IMR-90 (cell line): ENCODE measurements at regions of chr13 and their contacts with region 1.

Region 1: GRCh38 chr13:102642475-102642874 is 45.7 kb downstream of the TPP2 start:
- DNase-seq: no peak
- ATAC-seq: no peak
- H3K4me3 ChIP-seq: no peak overlapping the region
- H3K27ac ChIP-seq: no peak overlapping the region
- H3K4me1 ChIP-seq: no peaks in the 10 kb centered on the region
- H3K27me3 ChIP-seq: no peaks in the 10 kb centered on the region
- CTCF ChIP-seq: no peak
- POLR2A ChIP-seq: no peak
- RAD21 ChIP-seq: no peak

Region 2: DNA sequence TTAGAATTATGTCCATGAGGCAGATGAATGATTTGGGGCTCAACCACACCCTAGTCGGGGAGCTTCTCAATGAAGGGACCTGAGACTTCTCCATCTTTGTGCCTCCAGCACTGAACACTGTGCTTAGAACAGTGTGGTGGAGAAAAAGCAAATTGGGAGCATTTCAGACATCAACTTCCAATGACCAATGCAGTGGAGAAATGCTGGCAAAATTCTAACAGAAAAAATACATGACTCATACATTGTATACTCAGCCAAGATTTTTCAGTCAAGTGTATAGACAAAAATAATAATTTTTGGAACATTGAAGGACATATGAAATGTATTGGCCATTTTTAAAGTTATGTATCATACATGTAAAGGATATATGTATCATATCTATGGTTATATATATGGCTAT is 375.3 kb before region 1 on chr13:
- CTCF ChIA-PET with region 1: no interaction called
- POLR2A ChIA-PET with region 1: no interaction called
- dilution Hi-C with region 1: no loop called
- in situ Hi-C with region 1: no loop called
- intact Hi-C with region 1: no loop called
- DNase-seq: peak; percentile 17
- ATAC-seq: peak; percentile 32; the same call in 1 of the 2 replicates
- H3K4me3 ChIP-seq: no peak overlapping the region
- H3K27ac ChIP-seq: no peak overlapping the region
- H3K4me1 ChIP-seq: no peaks in the 10 kb centered on the region
- H3K27me3 ChIP-seq: no peaks in the 10 kb centered on the region; the same call in 1 of the 2 replicates
- CTCF ChIP-seq: no peak
- POLR2A ChIP-seq: no peak
- RAD21 ChIP-seq: no peak

Region 3: DNA sequence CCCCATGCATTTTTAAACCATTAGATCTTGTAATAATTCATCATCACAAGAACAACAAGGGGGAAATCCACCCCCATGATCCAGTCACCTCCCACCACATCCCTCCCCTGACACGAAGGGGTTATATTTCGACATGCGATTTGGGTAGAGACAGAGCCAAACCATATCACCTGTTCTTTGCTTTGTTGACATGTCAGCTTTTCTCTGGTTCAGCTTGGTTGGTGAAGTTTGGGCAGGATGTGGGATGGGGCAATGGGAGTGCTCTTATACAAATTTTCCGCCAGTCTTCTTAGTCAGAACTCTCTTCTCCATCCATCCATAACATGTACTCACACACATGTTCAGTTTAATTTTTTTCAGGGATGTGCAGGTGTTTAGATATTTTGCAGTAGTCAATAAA is 32.8 kb before region 1 on chr13:
- CTCF ChIA-PET with region 1: no interaction called
- POLR2A ChIA-PET with region 1: no interaction called
- dilution Hi-C with region 1: no loop called
- in situ Hi-C with region 1: no loop called
- intact Hi-C with region 1: loop called (anchors 5 kb)
- DNase-seq: no peak
- ATAC-seq: no peak
- H3K4me3 ChIP-seq: no peak overlapping the region
- H3K27ac ChIP-seq: no peak overlapping the region
- H3K4me1 ChIP-seq: peaks cover 1% of the 10 kb centered on the region; the same call in 1 of the 2 replicates
- H3K27me3 ChIP-seq: no peaks in the 10 kb centered on the region
- CTCF ChIP-seq: no peak
- POLR2A ChIP-seq: no peak
- RAD21 ChIP-seq: no peak

Region 4: DNA sequence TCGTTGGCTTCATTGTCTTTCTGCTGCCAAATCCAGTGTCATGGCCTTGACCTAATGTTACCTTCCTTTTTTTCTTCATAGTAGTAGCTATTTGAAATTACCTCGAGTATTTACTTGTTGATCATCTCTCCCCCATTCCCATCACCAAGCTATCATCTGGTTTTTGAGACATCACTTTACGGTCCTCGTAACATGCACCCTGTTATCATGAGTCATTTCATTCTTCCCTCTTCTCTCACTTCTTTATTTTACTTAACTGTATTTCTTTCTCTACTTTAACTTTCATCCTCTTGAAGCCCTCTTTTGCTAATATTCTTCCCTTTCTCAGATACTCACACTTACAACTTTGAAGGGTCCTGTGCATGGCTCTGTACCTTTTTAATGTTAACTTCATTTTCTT is 13.9 kb before region 1 on chr13:
- CTCF ChIA-PET with region 1: no interaction called
- POLR2A ChIA-PET with region 1: no interaction called
- dilution Hi-C with region 1: no loop called
- in situ Hi-C with region 1: no loop called
- intact Hi-C with region 1: loop called (anchors 2 kb)
- DNase-seq: no peak
- ATAC-seq: no peak
- H3K4me3 ChIP-seq: no peak overlapping the region
- H3K27ac ChIP-seq: no peak overlapping the region
- H3K4me1 ChIP-seq: no peaks in the 10 kb centered on the region
- H3K27me3 ChIP-seq: no peaks in the 10 kb centered on the region
- CTCF ChIP-seq: no peak
- POLR2A ChIP-seq: no peak
- RAD21 ChIP-seq: no peak

Region 5: GRCh38 chr13:102678339-102679107 is 36.0 kb after region 1 on chr13:
- CTCF ChIA-PET with region 1: no interaction called
- POLR2A ChIA-PET with region 1: no interaction called
- dilution Hi-C with region 1: no loop called
- in situ Hi-C with region 1: no loop called
- intact Hi-C with region 1: loop called (anchors 2 kb)
- DNase-seq: no peak
- ATAC-seq: no peak
- H3K4me3 ChIP-seq: no peak overlapping the region
- H3K27ac ChIP-seq: no peak overlapping the region
- H3K4me1 ChIP-seq: no peaks in the 10 kb centered on the region
- H3K27me3 ChIP-seq: no peaks in the 10 kb centered on the region
- CTCF ChIP-seq: no peak
- POLR2A ChIP-seq: no peak
- RAD21 ChIP-seq: no peak